GM12878 (cell line): ENCODE measurements at regions of chr1 and their contacts with region 1.

Region 1: DNA sequence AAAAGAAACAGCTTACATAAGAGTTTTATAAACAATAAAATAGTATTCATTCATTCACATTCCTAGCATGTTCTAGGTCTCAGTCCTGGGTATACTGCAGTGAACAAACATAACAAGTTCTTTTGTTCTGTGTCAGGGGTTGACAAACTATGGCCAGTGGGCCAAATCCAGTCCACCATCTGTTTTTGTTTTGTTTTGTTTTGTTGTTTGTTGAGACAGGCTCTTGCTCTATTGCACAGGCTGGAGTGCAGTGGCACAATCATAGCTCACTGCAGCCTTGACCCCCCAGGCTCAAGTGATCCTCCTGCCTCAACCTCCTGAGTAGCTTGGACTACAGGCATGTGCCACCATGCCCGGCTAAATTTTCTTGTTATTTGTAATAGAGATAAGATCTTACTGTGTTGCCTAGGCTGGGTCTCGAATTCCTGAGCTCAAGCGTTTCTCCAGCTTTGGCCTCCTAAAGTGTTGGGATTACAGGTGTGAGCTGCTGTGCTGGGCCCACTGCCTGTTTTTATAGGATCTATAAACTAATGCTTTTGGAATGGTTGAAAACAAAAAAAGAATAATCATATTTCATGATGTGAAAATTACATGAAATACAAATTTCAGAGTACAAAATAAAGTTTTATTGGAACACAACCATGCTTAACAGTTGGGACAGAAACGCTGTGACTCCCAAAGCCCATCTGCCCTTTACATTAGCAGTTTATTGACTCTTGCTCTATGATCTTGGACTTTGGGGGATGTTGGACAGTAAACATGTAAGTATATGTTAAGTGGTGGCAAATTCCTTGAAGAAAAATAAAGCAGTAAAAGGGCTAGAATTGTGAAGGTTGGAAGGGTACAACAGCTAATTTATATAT is 17.9 kb downstream of the CAPZA1 start:
- DNase-seq: no peak
- ATAC-seq: no peak
- H3K4me3 ChIP-seq: no peak overlapping the region
- H3K27ac ChIP-seq: peak overlapping the region; percentile 48; the same call in 1 of the 2 replicates
- H3K4me1 ChIP-seq: peaks cover 27% of the 10 kb centered on the region
- H3K27me3 ChIP-seq: no peaks in the 10 kb centered on the region
- CTCF ChIP-seq: no peak
- EP300 ChIP-seq: no peak
- POLR2A ChIP-seq: no peak
- RAD21 ChIP-seq: no peak

Region 2: GRCh38 chr1:112619520-112620376 is 17.7 kb before region 1 on chr1 and contains the start of gene CAPZA1:
- CTCF ChIA-PET with region 1: interaction called, 4 read pairs
- POLR2A ChIA-PET with region 1: interaction called, 9 read pairs
- RAD21 ChIA-PET with region 1: interaction called, 23 read pairs
- SMC1A ChIA-PET with region 1: interaction called, 24 read pairs
- in situ Hi-C with region 1: no loop called
- intact Hi-C with region 1: no loop called
- DNase-seq: peak; percentile 62
- ATAC-seq: peak; percentile 85
- H3K4me3 ChIP-seq: peak within 1 kb of the TSS; percentile 77
- H3K27ac ChIP-seq: peak within 1 kb of the TSS; percentile 100
- H3K4me1 ChIP-seq: peaks cover 4% of the 10 kb centered on the region
- H3K27me3 ChIP-seq: no peaks in the 10 kb centered on the region
- CTCF ChIP-seq: no peak
- EP300 ChIP-seq: peak in 1 of 2 experiments; percentile 32; a peak in 1 of 4 replicates
- POLR2A ChIP-seq: peak; percentile 93
- RAD21 ChIP-seq: no peak
- polyA plus RNA-seq, gene CAPZA1: 401 to 886 TPM

Region 3: DNA sequence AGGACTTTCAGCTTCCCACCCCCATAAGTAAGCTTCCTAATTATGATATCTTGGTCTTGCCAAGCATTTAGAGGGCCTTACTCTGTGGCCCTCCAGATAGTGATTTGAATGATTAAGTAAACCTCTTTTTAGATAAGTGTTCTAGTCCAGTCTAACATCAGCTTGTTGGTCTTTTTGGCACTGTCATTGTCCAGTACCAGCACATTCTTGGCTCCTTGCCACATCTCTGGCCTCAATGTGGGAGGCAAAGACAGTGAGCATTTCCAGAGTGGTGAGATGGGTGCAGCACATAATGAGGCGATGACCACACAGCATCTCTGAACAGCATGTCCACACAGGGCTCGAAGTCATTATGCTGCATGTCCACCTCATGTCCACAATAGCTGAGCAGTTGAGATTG is 11.8 kb before region 1 on chr1:
- CTCF ChIA-PET with region 1: interaction called, 8 read pairs
- POLR2A ChIA-PET with region 1: interaction called, 9 read pairs
- RAD21 ChIA-PET with region 1: interaction called, 23 read pairs
- SMC1A ChIA-PET with region 1: interaction called, 24 read pairs
- in situ Hi-C with region 1: no loop called
- intact Hi-C with region 1: no loop called
- DNase-seq: no peak
- ATAC-seq: no peak; the same call in 1 of the 3 replicates
- H3K4me3 ChIP-seq: no peak overlapping the region
- H3K27ac ChIP-seq: no peak overlapping the region; the same call in 1 of the 2 replicates
- H3K4me1 ChIP-seq: peaks cover 7% of the 10 kb centered on the region; the same call in 1 of the 2 replicates
- H3K27me3 ChIP-seq: no peaks in the 10 kb centered on the region
- CTCF ChIP-seq: no peak
- EP300 ChIP-seq: no peak
- POLR2A ChIP-seq: no peak
- RAD21 ChIP-seq: no peak

Region 4: GRCh38 chr1:112651205-112651604 is 13.7 kb after region 1 on chr1:
- CTCF ChIA-PET with region 1: interaction called, 7 read pairs
- POLR2A ChIA-PET with region 1: interaction called, 4 read pairs
- RAD21 ChIA-PET with region 1: interaction called, 8 read pairs
- SMC1A ChIA-PET with region 1: interaction called, 11 read pairs
- in situ Hi-C with region 1: no loop called
- intact Hi-C with region 1: no loop called
- DNase-seq: no peak
- ATAC-seq: no peak
- H3K4me3 ChIP-seq: no peak overlapping the region
- H3K27ac ChIP-seq: no peak overlapping the region
- H3K4me1 ChIP-seq: no peaks in the 10 kb centered on the region
- H3K27me3 ChIP-seq: no peaks in the 10 kb centered on the region
- CTCF ChIP-seq: no peak
- EP300 ChIP-seq: no peak
- POLR2A ChIP-seq: no peak
- RAD21 ChIP-seq: no peak

Region 5: DNA sequence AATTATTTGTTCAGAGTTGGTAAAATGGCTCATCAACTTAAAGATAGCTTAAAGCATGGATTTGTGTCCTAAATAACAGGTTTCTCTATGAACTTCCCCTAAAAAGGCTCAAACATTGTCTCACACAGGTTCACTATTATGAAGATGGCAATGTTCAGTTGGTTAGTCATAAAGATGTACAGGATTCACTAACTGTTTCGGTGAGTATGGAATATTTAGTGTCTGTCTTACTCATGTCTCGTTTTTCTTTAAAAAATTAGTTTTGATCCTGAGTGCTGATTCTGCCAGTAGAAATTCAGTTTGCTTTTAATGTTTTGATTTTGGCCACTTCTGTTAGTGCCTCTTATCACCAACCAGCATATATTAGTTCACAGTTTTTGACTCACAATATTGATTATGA is 29.5 kb after region 1 on chr1:
- CTCF ChIA-PET with region 1: interaction called, 5 read pairs
- POLR2A ChIA-PET with region 1: interaction called, 3 read pairs
- RAD21 ChIA-PET with region 1: interaction called, 22 read pairs
- SMC1A ChIA-PET with region 1: interaction called, 6 read pairs
- in situ Hi-C with region 1: no loop called
- intact Hi-C with region 1: loop called (anchors 5 kb)
- DNase-seq: no peak
- ATAC-seq: no peak
- H3K4me3 ChIP-seq: no peak overlapping the region
- H3K27ac ChIP-seq: no peak overlapping the region
- H3K4me1 ChIP-seq: no peaks in the 10 kb centered on the region
- H3K27me3 ChIP-seq: no peaks in the 10 kb centered on the region
- CTCF ChIP-seq: no peak
- EP300 ChIP-seq: no peak
- POLR2A ChIP-seq: no peak
- RAD21 ChIP-seq: no peak

Region 6: DNA sequence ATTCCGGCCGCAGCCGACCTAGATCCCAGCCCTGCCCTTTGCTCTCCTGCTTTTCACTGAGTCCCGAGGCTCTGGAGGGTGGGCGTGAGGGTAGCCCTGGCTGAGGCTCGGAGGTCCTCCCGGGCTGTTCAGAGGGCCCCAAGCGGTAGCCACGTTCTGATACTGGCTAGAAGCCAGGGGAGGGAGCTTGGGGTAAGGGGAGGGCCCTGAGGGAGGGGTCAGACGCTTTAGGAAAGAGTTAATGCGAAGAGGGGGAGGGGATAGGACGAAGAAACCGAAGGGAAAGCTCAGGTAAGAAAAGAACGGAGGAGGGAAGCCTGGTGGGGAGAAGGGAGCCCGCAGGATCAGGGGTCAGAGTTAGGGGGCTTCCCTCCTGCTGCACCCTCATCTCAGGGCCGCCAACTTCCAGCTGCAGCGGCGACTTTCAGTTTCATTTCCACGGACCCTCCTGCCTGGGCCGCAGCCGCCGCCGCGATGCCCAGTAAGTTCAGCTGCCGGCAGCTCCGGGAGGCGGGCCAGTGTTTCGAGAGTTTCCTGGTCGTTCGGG is 37.0 kb after region 1 on chr1 and contains the start of gene MOV10:
- CTCF ChIA-PET with region 1: interaction called, 5 read pairs
- POLR2A ChIA-PET with region 1: interaction called, 8 read pairs
- RAD21 ChIA-PET with region 1: interaction called, 22 read pairs
- SMC1A ChIA-PET with region 1: interaction called, 3 read pairs
- in situ Hi-C with region 1: no loop called
- intact Hi-C with region 1: loop called (anchors 5 kb)
- DNase-seq: peak; percentile 40
- ATAC-seq: peak; percentile 81
- H3K4me3 ChIP-seq: peak within 1 kb of the TSS; percentile 86
- H3K27ac ChIP-seq: peak within 1 kb of the TSS; percentile 81
- H3K4me1 ChIP-seq: peaks cover 9% of the 10 kb centered on the region
- H3K27me3 ChIP-seq: no peaks in the 10 kb centered on the region
- CTCF ChIP-seq: no peak
- EP300 ChIP-seq: 0 out of 4 replicates have a peak, but pooled peaks of 1 of the 2 experiments have one; percentile 16
- POLR2A ChIP-seq: peak; percentile 74
- RAD21 ChIP-seq: no peak
- polyA plus RNA-seq, gene MOV10: 21.0 to 28.6 TPM